ENCODE measurements at regions of chr14 and their contacts with region 1.

Region 1: DNA sequence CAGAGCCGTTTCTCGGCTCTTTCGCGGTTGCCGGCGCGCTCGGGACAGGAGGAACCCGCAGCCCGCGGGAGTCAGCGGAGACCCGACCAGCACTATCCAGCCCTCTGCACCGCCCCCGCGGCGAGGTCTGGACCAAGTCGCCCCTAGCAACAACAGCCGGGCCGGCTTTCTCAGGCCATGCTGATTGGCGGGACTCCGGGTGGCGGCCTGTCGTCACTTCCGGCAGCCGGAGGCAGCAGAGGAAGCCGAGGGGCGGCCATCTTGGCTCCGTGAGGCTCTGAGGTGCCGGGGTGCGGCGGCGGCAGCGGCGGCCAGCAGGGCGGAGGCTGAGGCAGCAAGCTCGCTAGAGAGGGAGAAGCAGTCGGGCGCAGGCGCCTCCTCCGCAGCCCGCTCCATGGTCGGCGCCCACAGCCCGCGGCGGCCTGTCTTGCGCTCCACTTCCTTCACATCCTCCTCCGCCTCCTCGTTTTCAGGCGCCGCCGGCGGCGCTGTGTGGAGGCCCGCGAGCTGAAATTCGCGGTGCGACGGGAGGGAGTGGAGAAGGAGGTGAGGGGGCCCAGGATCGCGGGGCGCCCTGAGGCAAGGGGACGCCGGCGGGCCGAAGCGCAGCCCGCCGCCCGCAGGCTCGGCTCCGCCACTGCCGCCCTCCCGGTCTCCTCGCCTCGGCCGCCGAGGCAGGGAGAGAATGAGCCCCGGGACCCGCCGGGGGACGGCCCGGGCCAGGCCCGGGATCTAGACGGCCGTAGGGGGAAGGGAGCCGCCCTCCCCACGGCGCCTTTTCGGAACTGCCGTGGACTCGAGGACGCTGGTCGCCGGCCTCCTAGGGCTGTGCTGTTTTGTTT is at the start of gene MARK3:
- DNase-seq: peak; percentile 97
- H3K4me3 Mint-ChIP-seq: peak within 1 kb of the TSS; percentile 99
- H3K27ac Mint-ChIP-seq: peak within 1 kb of the TSS; percentile 98
- H3K4me1 Mint-ChIP-seq: peaks cover 57% of the 10 kb centered on the region
- H3K27me3 Mint-ChIP-seq: peaks cover 5% of the 10 kb centered on the region
- total RNA-seq, gene MARK3: 89.6 and 90.6 TPM in 2 replicates

Region 2: GRCh38 chr14:103401223-103402214 is 16.1 kb after region 1 on chr14:
- intact Hi-C with region 1: loop called (anchors 2 kb)
- DNase-seq: no peak
- H3K4me3 Mint-ChIP-seq: no peak overlapping the region
- H3K27ac Mint-ChIP-seq: peak overlapping the region; percentile 61
- H3K4me1 Mint-ChIP-seq: peaks cover 41% of the 10 kb centered on the region
- H3K27me3 Mint-ChIP-seq: no peaks in the 10 kb centered on the region

Region 3: GRCh38 chr14:103427485-103428443 is 42.4 kb after region 1 on chr14:
- intact Hi-C with region 1: loop called (anchors 5 kb)
- DNase-seq: peak; percentile 2
- H3K4me3 Mint-ChIP-seq: no peak overlapping the region
- H3K27ac Mint-ChIP-seq: peak overlapping the region; percentile 29
- H3K4me1 Mint-ChIP-seq: peaks cover 22% of the 10 kb centered on the region
- H3K27me3 Mint-ChIP-seq: no peaks in the 10 kb centered on the region

Region 4: DNA sequence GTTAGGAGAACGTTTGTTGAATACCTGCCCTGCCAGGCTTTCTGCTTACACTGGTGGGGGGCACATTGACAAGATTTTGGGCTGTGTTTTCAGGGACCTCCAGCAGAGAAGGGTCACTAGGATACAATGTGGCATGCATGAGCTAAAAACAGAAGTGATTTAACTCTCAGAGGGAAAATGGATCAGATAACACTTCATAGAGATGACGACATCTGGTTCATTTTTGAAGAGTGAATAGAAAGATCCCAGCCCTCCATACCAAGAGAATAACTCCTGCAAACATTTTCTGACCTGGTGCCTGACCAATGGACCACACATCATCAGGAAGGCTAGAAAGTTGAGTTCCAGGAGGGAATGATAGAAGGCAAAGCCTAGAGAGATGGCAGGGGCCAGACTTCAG is 103.6 kb after region 1 on chr14:
- intact Hi-C with region 1: no loop called
- DNase-seq: no peak
- H3K4me3 Mint-ChIP-seq: no peak overlapping the region
- H3K27ac Mint-ChIP-seq: no peak overlapping the region
- H3K4me1 Mint-ChIP-seq: no peaks in the 10 kb centered on the region
- H3K27me3 Mint-ChIP-seq: no peaks in the 10 kb centered on the region

Measured in activated T-helper 1 cell treated with anti-CD3 and anti-CD28 coated beads, Interleukin-12 subunit alpha, Interleukin-12 subunit beta, Interleukin-2, Interleukin-4 antibody, amounts not matched to agents 30 ng/mL and 10 ng/mL and 1 ng/mL, durations not matched to agents 14 hours and 24 hours and 36 hours (primary cell).